GM18951 (cell line): ENCODE measurements at regions of chr1 and their contacts with region 1.

Region 1: GRCh38 chr1:38586993-38587646 is 272.5 kb downstream of the RRAGC start:
- POLR2A ChIP-seq: no peak

Region 2: DNA sequence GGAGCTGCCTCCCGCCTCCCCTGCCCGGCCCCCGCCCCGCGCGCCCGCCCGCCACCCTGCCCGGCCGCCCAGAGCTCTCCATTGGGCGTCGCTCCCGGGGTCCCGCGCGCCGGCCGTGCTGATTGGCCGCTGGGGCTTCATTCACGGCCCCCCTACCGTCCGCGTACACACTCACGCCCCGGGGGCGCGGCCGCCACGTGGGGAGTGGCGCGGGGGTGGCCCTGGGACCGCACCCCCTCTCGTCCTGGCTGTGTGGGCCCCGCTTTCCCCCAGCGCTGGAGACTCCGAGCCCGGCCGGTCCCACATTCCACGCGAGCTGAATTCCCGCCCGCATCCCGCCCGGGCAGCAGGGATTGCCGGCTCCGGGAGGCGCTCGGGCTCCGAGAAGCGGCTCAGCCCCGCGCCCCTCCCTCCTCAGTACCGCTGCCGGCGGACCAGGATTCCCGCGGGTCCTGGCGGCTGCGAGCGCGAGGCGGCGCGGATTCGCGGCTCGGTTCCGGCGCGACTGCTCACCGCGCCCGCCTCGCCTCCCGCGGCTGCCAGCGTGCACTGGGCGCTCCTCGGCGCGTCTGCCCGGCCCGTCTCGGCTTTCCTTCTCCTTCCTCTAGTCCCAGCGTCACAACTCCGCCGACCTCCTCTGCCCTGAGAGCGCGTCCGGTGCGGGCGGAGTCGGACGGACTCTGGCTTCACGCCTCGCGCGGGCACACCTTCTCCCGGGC is 540.1 kb before region 1 on chr1:
- in situ Hi-C with region 1: loop called (anchors 25 kb)
- POLR2A ChIP-seq: no peak

Region 3: GRCh38 chr1:38973659-38974424 is 386.7 kb after region 1 on chr1:
- in situ Hi-C with region 1: no loop called
- POLR2A ChIP-seq: no peak